GM18951 (cell line): ENCODE measurements at regions of chr6 and their contacts with region 1.

Region 1: DNA sequence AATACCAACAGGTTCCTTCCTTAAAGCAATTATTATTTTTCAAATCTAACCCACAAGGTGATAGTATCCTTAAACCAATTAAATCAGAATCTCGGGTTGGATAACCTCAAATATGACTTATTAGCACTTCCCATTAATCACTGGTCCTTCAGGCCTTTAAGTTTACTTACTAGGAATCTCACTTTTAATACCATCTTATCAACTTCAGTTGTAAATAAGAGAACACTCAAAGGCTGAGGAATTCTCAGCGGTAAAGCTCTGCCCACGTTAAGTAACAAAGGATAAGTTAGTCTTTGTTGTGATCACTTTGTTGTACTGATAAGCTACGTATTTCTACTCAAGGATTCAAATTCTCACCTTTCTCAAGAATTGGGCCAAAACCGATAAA is 82.0 kb downstream of the OR2B2 start:
- POLR2A ChIP-seq: no peak

Region 2: GRCh38 chr6:27864906-27865849 is 35.0 kb after region 1 on chr6:
- in situ Hi-C with region 1: loop called (anchors 5 kb)
- POLR2A ChIP-seq: peak; percentile 97

Region 3: GRCh38 chr6:28383235-28384142 is 553.3 kb after region 1 on chr6:
- in situ Hi-C with region 1: no loop called
- POLR2A ChIP-seq: peak; percentile 48